Transverse colon (tissue), 4 donors: ENCODE measurements at regions of chr16 and their contacts with region 1.

Region 1: DNA sequence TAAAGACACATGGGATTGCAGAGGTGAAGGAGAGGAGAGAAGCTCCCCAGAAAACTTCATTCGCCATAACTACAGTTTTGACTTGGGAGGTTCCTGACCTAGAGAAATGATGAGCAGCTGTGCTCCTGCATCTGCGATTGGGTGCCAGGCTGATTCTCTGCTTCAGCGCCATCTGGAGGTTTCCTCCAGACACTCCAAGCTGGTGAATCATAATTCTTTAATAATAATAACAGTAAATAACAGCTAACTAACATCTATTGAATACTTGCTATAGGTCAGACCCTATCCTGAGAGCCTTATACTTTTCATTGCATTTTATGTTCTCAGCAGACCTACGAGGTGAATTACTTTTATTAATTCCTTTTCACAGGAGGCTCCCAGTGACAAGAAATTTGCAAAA is 575.8 kb downstream of the TOX3 start:
- DNase-seq: no peak
- H3K4me3 ChIP-seq: no peak overlapping the region
- H3K27ac ChIP-seq: no peak overlapping the region
- H3K4me1 ChIP-seq: no peaks in the 10 kb centered on the region
- H3K27me3 ChIP-seq: no peaks in the 10 kb centered on the region
- CTCF ChIP-seq: no peak
- EP300 ChIP-seq: no peak
- POLR2A ChIP-seq: no peak

Region 2: GRCh38 chr16:51877686-51878085 is 93.5 kb before region 1 on chr16:
- in situ Hi-C with region 1: no loop called
- intact Hi-C with region 1: loop called (anchors 1 kb)
- DNase-seq: no peak
- H3K4me3 ChIP-seq: no peak overlapping the region
- H3K27ac ChIP-seq: peak overlapping the region in 1 of 4 donors; percentile 43
- H3K4me1 ChIP-seq: no peaks in the 10 kb centered on the region
- H3K27me3 ChIP-seq: no peaks in the 10 kb centered on the region
- CTCF ChIP-seq: no peak
- EP300 ChIP-seq: no peak
- POLR2A ChIP-seq: no peak